ENCODE measurements at regions of chr13 and their contacts with region 1.

Region 1: DNA sequence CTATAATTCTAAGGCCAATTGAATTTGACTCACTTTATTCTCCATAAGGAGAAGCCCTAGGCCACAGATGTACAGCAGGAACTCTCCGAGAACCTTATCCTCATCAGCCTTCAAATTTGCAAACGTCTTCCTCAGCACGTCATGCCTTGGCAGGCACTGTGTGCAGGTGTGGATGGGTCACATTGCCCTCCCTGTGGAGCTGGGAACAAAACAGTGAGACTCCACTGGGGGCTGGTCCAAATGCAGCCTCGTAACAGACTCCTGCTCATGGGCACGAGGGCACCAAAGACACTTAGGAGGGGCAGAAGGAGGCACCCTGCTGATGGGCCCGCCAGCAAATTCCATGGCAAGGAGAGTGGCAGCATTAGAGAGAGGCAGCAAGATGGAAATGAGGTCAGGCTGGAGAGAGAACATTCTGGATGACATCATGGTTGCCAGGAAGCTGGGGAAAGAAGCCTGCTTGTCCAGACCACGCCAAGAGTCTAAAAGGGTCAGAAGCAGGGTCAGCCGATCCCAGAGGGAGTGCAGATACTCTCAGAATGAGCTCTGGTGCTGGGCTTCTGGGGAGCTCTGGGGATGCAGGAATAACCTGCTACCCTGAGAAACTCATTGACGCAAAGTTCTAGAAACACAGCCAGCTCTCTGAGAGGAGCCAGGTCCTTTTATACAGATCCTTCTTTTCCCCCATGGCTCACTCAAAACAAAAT is 242.2 kb downstream of the B3GLCT start:
- DNase-seq: no peak
- ATAC-seq: no peak
- H3K4me3 ChIP-seq: no peak overlapping the region
- H3K27ac ChIP-seq: no peak overlapping the region
- H3K4me1 ChIP-seq: no peaks in the 10 kb centered on the region
- H3K27me3 ChIP-seq: no peaks in the 10 kb centered on the region
- CTCF ChIP-seq: no peak
- POLR2A ChIP-seq: no peak

Region 2: GRCh38 chr13:31377946-31378345 is 64.0 kb before region 1 on chr13:
- intact Hi-C with region 1: no loop called
- DNase-seq: no peak
- ATAC-seq: no peak
- H3K4me3 ChIP-seq: no peak overlapping the region
- H3K27ac ChIP-seq: no peak overlapping the region
- H3K4me1 ChIP-seq: no peaks in the 10 kb centered on the region
- H3K27me3 ChIP-seq: no peaks in the 10 kb centered on the region
- CTCF ChIP-seq: no peak
- POLR2A ChIP-seq: no peak

Region 3: GRCh38 chr13:31749929-31750328 is 308.0 kb after region 1 on chr13:
- intact Hi-C with region 1: loop called (anchors 10 kb)
- DNase-seq: no peak
- ATAC-seq: no peak
- H3K4me3 ChIP-seq: no peak overlapping the region
- H3K27ac ChIP-seq: no peak overlapping the region
- H3K4me1 ChIP-seq: no peaks in the 10 kb centered on the region
- H3K27me3 ChIP-seq: no peaks in the 10 kb centered on the region
- CTCF ChIP-seq: no peak
- POLR2A ChIP-seq: no peak

Measured in right lobe of liver (tissue), 6 donors.